Caco-2 (cell line): ENCODE measurements at regions of chr17 and their contacts with region 1.

Region 1: GRCh38 chr17:75271233-75271954 is 363 bp upstream of the MIF4GD start:
- DNase-seq: peak; percentile 67 to 93
- H3K4me3 ChIP-seq: peak overlapping the region; percentile 97
- H3K4me3 Mint-ChIP-seq: peak overlapping the region; percentile 71
- H3K27ac Mint-ChIP-seq: peak overlapping the region; percentile 1
- H3K4me1 ChIP-seq: peaks cover 14% of the 10 kb centered on the region; the same call in 1 of the 2 replicates
- H3K4me1 Mint-ChIP-seq: peaks cover 15% of the 10 kb centered on the region
- H3K27me3 ChIP-seq: no peaks in the 10 kb centered on the region
- H3K27me3 Mint-ChIP-seq: no peaks in the 10 kb centered on the region
- CTCF ChIP-seq: peak; percentile 41 to 91

Region 2: GRCh38 chr17:75228305-75228704 is 43.1 kb before region 1 on chr17:
- CTCF ChIA-PET with region 1: no interaction called
- POLR2A ChIA-PET with region 1: no interaction called
- intact Hi-C with region 1: no loop called
- DNase-seq: no peak
- H3K4me3 ChIP-seq: no peak overlapping the region
- H3K4me3 Mint-ChIP-seq: no peak overlapping the region
- H3K27ac Mint-ChIP-seq: no peak overlapping the region
- H3K4me1 ChIP-seq: no peaks in the 10 kb centered on the region
- H3K4me1 Mint-ChIP-seq: no peaks in the 10 kb centered on the region
- H3K27me3 ChIP-seq: no peaks in the 10 kb centered on the region
- H3K27me3 Mint-ChIP-seq: no peaks in the 10 kb centered on the region
- CTCF ChIP-seq: no peak

Region 3: GRCh38 chr17:75238684-75239191 is 32.7 kb before region 1 on chr17:
- CTCF ChIA-PET with region 1: interaction called, 33 read pairs
- POLR2A ChIA-PET with region 1: interaction called, 3 read pairs
- intact Hi-C with region 1: no loop called
- DNase-seq: peak; percentile 72 to 74
- H3K4me3 ChIP-seq: no peak overlapping the region
- H3K4me3 Mint-ChIP-seq: no peak overlapping the region
- H3K27ac Mint-ChIP-seq: peak overlapping the region; percentile 81
- H3K4me1 ChIP-seq: peaks cover 16% of the 10 kb centered on the region
- H3K4me1 Mint-ChIP-seq: peaks cover 19% of the 10 kb centered on the region
- H3K27me3 ChIP-seq: no peaks in the 10 kb centered on the region
- H3K27me3 Mint-ChIP-seq: no peaks in the 10 kb centered on the region
- CTCF ChIP-seq: peak; percentile 84 to 90

Region 4: GRCh38 chr17:75380315-75380714 is 108.9 kb after region 1 on chr17:
- CTCF ChIA-PET with region 1: interaction called, 4 read pairs
- POLR2A ChIA-PET with region 1: interaction called, 11 read pairs
- intact Hi-C with region 1: no loop called
- DNase-seq: no peak
- H3K4me3 ChIP-seq: no peak overlapping the region
- H3K4me3 Mint-ChIP-seq: no peak overlapping the region
- H3K27ac Mint-ChIP-seq: no peak overlapping the region
- H3K4me1 ChIP-seq: peaks cover 19% of the 10 kb centered on the region
- H3K4me1 Mint-ChIP-seq: peaks cover 18% of the 10 kb centered on the region
- H3K27me3 ChIP-seq: no peaks in the 10 kb centered on the region
- H3K27me3 Mint-ChIP-seq: no peaks in the 10 kb centered on the region
- CTCF ChIP-seq: no peak

Region 5: GRCh38 chr17:75405365-75406221 is 134.2 kb after region 1 on chr17 and contains the start of gene GRB2:
- CTCF ChIA-PET with region 1: interaction called, 23 read pairs
- POLR2A ChIA-PET with region 1: interaction called, 18 read pairs
- intact Hi-C with region 1: loop called (anchors 2 kb)
- DNase-seq: peak; percentile 99 to 100
- H3K4me3 ChIP-seq: peak within 1 kb of the TSS; percentile 70
- H3K4me3 Mint-ChIP-seq: peak within 1 kb of the TSS; percentile 78
- H3K27ac Mint-ChIP-seq: peak within 1 kb of the TSS; percentile 71
- H3K4me1 ChIP-seq: 0 out of 2 replicates have a peak, but pooled peaks cover 6% of the 10 kb centered on the region
- H3K4me1 Mint-ChIP-seq: peaks cover 12% of the 10 kb centered on the region
- H3K27me3 ChIP-seq: no peaks in the 10 kb centered on the region
- H3K27me3 Mint-ChIP-seq: no peaks in the 10 kb centered on the region
- CTCF ChIP-seq: no peak
- total RNA-seq, gene GRB2: 113 and 115 TPM in 2 replicates

Region 6: GRCh38 chr17:75456417-75457046 is 185.1 kb after region 1 on chr17 and contains the start of gene TMEM94:
- CTCF ChIA-PET with region 1: interaction called, 18 read pairs
- POLR2A ChIA-PET with region 1: interaction called, 3 read pairs
- intact Hi-C with region 1: no loop called
- DNase-seq: peak; percentile 96 to 97
- H3K4me3 ChIP-seq: peak within 1 kb of the TSS; percentile 46
- H3K4me3 Mint-ChIP-seq: peak within 1 kb of the TSS; percentile 92
- H3K27ac Mint-ChIP-seq: peak within 1 kb of the TSS; percentile 94
- H3K4me1 ChIP-seq: peaks cover 45% of the 10 kb centered on the region
- H3K4me1 Mint-ChIP-seq: peaks cover 30% of the 10 kb centered on the region
- H3K27me3 ChIP-seq: no peaks in the 10 kb centered on the region
- H3K27me3 Mint-ChIP-seq: no peaks in the 10 kb centered on the region
- CTCF ChIP-seq: no peak
- total RNA-seq, gene TMEM94: 109 and 115 TPM in 2 replicates